SK-N-SH (cell line): ENCODE measurements at regions of chr13 and their contacts with region 1.

Region 1: DNA sequence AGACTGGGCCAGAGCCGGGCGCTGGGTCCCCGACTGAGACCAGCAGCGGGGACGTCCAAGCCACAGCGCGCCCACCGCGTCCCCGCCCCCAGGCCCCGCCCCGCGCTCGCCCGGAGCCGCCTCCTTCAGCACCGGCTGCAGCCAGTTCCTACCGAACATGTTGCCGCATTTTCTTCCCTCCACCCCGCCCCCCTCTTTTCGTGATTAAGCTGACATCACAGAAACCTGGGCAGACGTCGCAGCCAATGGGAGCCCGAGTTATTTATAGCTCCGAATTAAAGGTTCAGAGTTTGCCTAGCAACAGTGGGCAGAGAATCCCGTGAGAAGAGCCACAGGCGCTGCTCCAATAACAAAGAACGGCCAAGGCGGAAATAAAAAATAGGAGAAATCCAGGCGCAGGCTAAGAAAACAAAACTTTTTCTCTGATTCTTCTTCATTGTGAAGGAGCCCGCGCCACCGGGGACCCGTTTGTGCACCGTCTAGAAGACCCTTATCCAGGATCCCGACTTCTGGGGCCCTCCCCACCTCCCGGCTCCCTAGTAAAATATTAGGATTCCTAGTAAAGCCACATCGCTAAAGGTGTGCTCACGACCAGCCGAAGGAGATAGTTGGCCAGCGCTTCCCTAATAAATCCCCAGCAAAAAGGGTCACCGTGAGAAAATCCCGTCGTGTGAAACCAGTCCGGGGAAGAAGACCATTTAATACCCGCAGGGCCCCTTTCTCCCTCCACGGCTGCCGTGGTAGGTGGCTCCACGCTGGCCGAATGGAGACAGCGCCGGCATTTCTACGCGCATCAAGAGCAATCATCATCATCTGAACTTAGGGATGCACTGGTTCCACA is 61.7 kb downstream of the SERP2 start:
- DNase-seq: peak; percentile 93
- H3K4me3 ChIP-seq: peak overlapping the region; percentile 83 to 92
- H3K27ac ChIP-seq: peak overlapping the region; percentile 94 to 98
- H3K4me1 ChIP-seq: peaks cover 17 to 28% of the 10 kb centered on the region in 2 experiments; a peak in 3 of 4 replicates
- H3K27me3 ChIP-seq: no peaks in the 10 kb centered on the region
- CTCF ChIP-seq: no peak
- EP300 ChIP-seq: peak; percentile 43 to 91; a peak in 2 of 4 replicates
- RAD21 ChIP-seq: peak; percentile 22

Region 2: DNA sequence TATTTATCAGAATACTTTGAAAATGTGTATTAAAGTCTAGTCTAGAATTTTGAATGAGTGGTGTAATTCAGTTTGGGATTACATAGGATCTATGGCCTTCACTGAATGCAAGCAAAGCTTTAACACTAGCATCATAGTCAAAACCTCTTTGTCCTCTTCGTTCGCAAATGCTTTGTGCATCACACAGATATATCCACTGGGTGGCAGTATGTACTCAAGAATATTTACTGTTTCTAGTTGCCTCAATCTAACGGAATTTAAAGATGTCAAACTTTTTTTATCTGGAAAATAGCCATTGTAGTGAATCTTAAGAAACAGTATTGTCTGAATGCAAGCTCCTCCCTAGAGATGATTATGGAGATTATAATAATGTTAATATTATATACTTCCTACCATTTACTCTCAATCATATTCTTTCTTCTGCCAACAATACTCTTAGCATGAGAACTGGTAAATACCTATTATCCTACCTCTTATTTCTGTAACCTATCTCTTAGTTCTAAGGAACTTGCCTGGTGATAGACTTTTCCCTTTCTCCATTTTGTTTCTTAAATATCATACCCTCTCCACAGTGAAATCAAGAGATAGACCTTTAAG is 529.8 kb before region 1 on chr13:
- CTCF ChIA-PET with region 1: interaction called, 158 read pairs
- POLR2A ChIA-PET with region 1: interaction called, 4 read pairs
- DNase-seq: peak; percentile 63
- H3K4me3 ChIP-seq: no peak overlapping the region
- H3K27ac ChIP-seq: no peak overlapping the region
- H3K4me1 ChIP-seq: peaks cover 0 to 6% of the 10 kb centered on the region in 2 experiments; a peak in 1 of 4 replicates
- H3K27me3 ChIP-seq: no peaks in the 10 kb centered on the region
- CTCF ChIP-seq: peak; percentile 83
- EP300 ChIP-seq: no peak
- RAD21 ChIP-seq: peak; percentile 93

Region 3: GRCh38 chr13:44052780-44053184 is 382.6 kb before region 1 on chr13:
- CTCF ChIA-PET with region 1: interaction called, 11 read pairs
- POLR2A ChIA-PET with region 1: interaction called, 8 read pairs
- DNase-seq: no peak
- H3K4me3 ChIP-seq: no peak overlapping the region
- H3K27ac ChIP-seq: no peak overlapping the region
- H3K4me1 ChIP-seq: no peaks in the 10 kb centered on the region; a peak in 2 of 4 replicates
- H3K27me3 ChIP-seq: no peaks in the 10 kb centered on the region
- CTCF ChIP-seq: no peak
- EP300 ChIP-seq: no peak
- RAD21 ChIP-seq: no peak

Region 4: DNA sequence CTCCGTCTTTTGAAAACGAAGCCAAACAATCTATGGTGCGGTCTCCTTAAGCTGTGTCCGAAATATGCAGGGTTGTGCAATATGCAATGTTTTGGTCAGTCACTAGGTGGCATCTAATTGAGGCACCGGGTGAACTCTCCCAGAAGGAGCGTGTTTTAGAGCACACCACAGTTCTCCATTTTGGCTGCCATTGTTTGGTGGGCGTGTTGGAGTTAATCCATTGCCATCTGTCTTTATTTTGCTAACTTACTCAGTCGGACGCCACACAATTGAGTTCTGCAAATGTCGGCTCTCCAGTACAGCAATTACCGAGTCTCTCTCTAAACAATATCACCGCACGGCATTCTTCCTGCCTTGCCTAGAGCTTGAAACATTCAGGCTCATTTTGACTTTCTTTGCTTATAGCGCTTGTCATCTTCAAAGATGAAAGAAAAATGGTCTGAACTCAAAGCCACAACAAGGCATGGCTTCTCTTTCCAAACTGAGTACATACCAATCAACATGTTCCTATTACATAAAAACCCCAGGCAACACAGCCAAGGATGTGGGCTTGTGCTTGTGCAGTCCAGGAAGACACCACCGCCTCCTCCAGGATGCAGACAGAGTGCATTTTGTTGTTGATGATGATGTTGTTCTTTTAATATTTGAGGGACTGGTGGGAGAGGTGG is 243.7 kb before region 1 on chr13:
- CTCF ChIA-PET with region 1: interaction called, 16 read pairs
- POLR2A ChIA-PET with region 1: interaction called, 16 read pairs
- DNase-seq: peak; percentile 58
- H3K4me3 ChIP-seq: no peak overlapping the region
- H3K27ac ChIP-seq: no peak overlapping the region
- H3K4me1 ChIP-seq: no peaks in the 10 kb centered on the region
- H3K27me3 ChIP-seq: no peaks in the 10 kb centered on the region; the same call in 1 of the 2 replicates
- CTCF ChIP-seq: peak; percentile 65
- EP300 ChIP-seq: no peak
- RAD21 ChIP-seq: peak; percentile 77

Region 5: DNA sequence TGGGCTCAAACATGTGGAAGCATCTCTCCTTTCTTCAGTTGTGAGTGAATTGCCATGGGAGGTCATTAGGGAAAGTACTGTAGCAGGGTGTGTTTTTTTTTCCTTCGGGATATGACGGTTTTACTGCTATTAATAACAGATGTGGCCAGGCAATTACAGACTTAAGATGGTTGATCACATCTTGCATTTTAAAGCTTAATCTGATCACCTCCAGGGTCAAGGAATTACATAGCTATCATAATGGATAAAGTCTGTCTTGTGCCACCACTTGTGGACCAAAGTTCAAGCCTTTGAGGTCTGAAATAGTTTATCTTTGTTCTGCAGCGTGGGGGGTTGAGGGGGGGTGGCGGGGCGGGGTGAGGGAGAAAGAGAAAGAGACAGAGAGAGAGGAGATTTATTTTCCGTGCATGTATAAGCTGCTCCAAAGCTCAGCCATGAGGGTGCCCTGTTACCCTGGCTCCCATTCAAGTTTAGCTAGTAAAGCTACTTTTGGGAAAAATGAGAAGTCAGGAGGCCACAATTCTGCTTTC is 67.2 kb before region 1 on chr13:
- CTCF ChIA-PET with region 1: interaction called, 5 read pairs
- POLR2A ChIA-PET with region 1: interaction called, 22 read pairs
- DNase-seq: peak; percentile 67
- H3K4me3 ChIP-seq: no peak overlapping the region
- H3K27ac ChIP-seq: peak overlapping the region; percentile 66 to 85; a peak in 3 of 4 replicates
- H3K4me1 ChIP-seq: peaks cover 17 to 39% of the 10 kb centered on the region in 2 experiments
- H3K27me3 ChIP-seq: no peaks in the 10 kb centered on the region
- CTCF ChIP-seq: no peak
- EP300 ChIP-seq: peak; percentile 69 to 72; a peak in 3 of 4 replicates
- RAD21 ChIP-seq: no peak

Region 6: DNA sequence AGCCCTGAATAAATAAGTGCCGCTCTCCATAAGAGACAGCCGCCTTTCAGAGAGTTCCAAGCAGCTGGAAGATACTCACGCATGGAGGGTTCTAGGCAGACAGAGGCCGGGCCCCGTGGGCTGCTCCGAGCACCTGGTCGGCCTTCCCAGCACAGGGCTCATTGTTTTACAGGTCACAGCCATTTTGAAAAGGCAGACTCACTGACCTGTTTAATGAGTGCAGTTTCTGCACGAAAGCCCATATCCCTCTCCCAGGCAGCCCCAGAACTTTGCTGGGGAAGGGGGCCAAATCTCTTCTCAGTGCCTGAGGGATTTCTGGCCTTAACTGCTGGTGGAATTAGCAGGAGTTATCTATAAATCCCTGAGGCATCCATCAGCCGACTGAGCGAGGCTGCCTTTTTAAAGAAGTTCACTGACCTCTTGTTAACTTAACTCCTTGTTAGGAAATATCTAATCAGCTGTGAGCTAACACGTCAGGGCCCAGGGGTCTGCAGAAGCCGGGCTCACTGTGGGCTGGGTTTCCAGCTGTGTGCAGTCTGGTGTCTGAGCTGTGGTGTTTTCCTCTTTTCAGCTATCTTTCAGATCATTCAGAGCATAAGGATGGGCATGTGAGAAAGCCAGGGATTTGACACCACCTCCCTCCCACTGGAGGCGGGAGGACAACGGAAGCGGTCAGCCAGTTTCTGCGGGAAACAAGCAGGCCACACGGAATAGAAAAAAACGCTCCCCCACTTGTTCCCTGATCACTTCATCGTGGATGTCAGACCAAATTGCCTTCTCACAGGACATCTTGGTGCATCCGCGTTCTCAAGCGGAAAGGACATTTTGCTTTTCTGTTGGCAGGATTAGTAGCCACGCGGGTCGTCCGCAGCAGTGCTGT is 38.4 kb before region 1 on chr13:
- CTCF ChIA-PET with region 1: interaction called, 4 read pairs
- POLR2A ChIA-PET with region 1: interaction called, 59 read pairs
- DNase-seq: peak; percentile 77
- H3K4me3 ChIP-seq: no peak overlapping the region
- H3K27ac ChIP-seq: peak overlapping the region in 1 of 2 experiments; percentile 98; a peak in 2 of 4 replicates
- H3K4me1 ChIP-seq: peaks cover 0 to 42% of the 10 kb centered on the region in 2 experiments; a peak in 2 of 4 replicates
- H3K27me3 ChIP-seq: no peaks in the 10 kb centered on the region
- CTCF ChIP-seq: no peak
- EP300 ChIP-seq: peak in 1 of 2 experiments; percentile 67; a peak in 2 of 4 replicates
- RAD21 ChIP-seq: peak; percentile 34

Region 7: DNA sequence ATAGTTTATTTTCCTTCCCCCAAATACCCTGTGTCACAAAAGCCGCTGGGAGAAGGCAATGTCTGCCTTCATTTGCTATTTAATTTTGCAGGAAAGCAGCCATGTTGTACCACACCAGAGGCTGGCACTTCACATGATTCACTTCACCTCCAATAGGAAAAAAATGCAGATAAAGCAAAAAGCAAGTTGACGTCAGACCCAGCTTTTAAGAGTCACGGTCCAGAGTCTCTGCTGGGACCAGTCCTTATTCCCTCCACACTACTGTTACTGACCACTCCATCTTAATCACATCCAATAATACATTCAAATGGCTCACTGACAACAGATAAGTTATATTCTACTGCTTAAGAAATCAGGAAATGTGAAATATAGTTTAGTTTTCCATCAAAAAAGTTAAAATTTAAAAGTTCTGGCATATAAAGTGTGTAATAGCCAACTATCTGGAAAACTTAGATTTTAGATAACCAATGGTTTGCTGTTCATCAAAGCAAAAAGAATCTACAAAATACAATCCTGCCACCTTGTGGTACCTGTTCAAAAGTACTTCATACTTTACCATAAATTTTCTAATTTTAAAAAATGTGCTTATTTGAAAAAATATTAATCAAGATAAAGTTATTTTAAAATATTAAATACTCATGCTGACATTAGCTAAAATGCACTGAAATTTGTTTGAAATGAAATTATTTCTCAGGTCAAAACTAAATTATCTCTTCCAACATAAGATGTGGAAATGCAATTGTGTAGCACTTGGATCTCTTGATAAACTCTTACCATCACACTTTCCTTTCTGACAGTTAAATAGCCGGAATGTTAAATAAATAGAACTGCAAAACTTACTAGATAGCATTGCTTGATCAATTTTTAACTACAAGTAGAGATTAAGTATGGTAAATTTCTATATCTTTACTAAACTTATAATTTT is 35.5 kb after region 1 on chr13:
- CTCF ChIA-PET with region 1: interaction called, 12 read pairs
- POLR2A ChIA-PET with region 1: no interaction called
- DNase-seq: no peak
- H3K4me3 ChIP-seq: no peak overlapping the region; a peak in 2 of 4 replicates
- H3K27ac ChIP-seq: peak overlapping the region; percentile 18 to 84
- H3K4me1 ChIP-seq: peaks cover 10 to 41% of the 10 kb centered on the region in 2 experiments; a peak in 3 of 4 replicates
- H3K27me3 ChIP-seq: no peaks in the 10 kb centered on the region
- CTCF ChIP-seq: peak; percentile 61
- EP300 ChIP-seq: no peak
- RAD21 ChIP-seq: peak; percentile 76

Region 8: DNA sequence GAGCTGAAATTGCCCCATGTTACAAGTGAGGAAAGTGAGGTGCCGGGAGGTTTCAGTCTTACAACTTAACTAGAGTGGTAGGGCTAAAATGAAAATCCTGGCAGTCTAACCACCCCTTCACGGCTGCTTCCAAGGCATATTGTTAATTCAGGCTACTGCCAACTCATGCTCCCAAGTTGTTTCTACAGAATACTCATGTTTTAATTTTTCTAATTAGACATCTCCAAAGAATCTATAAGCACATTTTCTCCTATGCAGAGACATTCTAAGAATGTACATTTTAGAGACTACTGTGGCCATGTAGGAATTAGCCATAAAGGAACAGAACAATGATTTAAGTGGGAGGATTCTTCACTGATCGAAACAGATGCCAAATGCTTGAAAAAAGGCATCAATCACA is 147.8 kb after region 1 on chr13:
- CTCF ChIA-PET with region 1: no interaction called
- POLR2A ChIA-PET with region 1: no interaction called
- DNase-seq: no peak
- H3K4me3 ChIP-seq: no peak overlapping the region
- H3K27ac ChIP-seq: no peak overlapping the region
- H3K4me1 ChIP-seq: peaks cover 0 to 3% of the 10 kb centered on the region in 2 experiments; a peak in 1 of 4 replicates
- H3K27me3 ChIP-seq: no peaks in the 10 kb centered on the region
- CTCF ChIP-seq: no peak
- EP300 ChIP-seq: no peak
- RAD21 ChIP-seq: no peak